ENCODE measurements at regions of chr5 and their contacts with region 1.

Region 1: GRCh38 chr5:151659001-151659754 is 27.5 kb downstream of the SPARC start:
- DNase-seq: peak; percentile 65 to 97
- H3K4me3 ChIP-seq: no peak overlapping the region
- CTCF ChIP-seq: peak in 1 of 3 donors; percentile 41
- POLR2A ChIP-seq: no peak

Region 2: GRCh38 chr5:151740336-151740942 is 81.3 kb after region 1 on chr5:
- intact Hi-C with region 1: loop called (anchors 5 kb)
- DNase-seq: peak; percentile 44 to 89
- H3K4me3 ChIP-seq: no peak overlapping the region
- CTCF ChIP-seq: peak in 1 of 3 donors; percentile 52
- POLR2A ChIP-seq: no peak

Region 3: DNA sequence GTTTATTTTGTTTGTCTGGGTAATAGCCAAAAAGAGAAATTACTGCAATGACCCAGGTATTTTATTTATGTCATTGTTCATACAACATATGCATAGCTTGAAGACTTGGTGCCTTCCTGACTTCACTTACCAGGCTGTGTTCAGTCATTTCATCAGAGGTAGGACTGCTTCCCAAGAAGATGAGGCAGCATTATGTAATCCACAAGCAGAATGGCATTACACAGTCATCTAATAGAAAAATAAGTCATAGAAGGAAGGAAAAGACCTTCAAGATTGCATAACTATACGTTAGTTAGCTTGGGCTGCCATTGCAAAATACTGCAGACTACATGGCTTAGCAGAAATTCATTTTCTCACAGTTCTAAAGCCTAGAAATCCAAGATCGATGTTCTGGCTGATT is 578.4 kb after region 1 on chr5:
- intact Hi-C with region 1: loop called (anchors 5 kb)
- DNase-seq: no peak
- H3K4me3 ChIP-seq: no peak overlapping the region
- CTCF ChIP-seq: no peak
- POLR2A ChIP-seq: no peak

Region 4: GRCh38 chr5:152397581-152397980 is 738.4 kb after region 1 on chr5:
- intact Hi-C with region 1: no loop called
- DNase-seq: no peak
- H3K4me3 ChIP-seq: no peak overlapping the region
- CTCF ChIP-seq: no peak
- POLR2A ChIP-seq: no peak

Region 5: GRCh38 chr5:153267506-153267905 is 1608.3 kb after region 1 on chr5:
- intact Hi-C with region 1: no loop called
- DNase-seq: no peak
- H3K4me3 ChIP-seq: no peak overlapping the region
- CTCF ChIP-seq: no peak
- POLR2A ChIP-seq: no peak

Measured in lower leg skin (tissue), 4 donors.